ENCODE measurements at regions of chr2 and their contacts with region 1.

Region 1: DNA sequence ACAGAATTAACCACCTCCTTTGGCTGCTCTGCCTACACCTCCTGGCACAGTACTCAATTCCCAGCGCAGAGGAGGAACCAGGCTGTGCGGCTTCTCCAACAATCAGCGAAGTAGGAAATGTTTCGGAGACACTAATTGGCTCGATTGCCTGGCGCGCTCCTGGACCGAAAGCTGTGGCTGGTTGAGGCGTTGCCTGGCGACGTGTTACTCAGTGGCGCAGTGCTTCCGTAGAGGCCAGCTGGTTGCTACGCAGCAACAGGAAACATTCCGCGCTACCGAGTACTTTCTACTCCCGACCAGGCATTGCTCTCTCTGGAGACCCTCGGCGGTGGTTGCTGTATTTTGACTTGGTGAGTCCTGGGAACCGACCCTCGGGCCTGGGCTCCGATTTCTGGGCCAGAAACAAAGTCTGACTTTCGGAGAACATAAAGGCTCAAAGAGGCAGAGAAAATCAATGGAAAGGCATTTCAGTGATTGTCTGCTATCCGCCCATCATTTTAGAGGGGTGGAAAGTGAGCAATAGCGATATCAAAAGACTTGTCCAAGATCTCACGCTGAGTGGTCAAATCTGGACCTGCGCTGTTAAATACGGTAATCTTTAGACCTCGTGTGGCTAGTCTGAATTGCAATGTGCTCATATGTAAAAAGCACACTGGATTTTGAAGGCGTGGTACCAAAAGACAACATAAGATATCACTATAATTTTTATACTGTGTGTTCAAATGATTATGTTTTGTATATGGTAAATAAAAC is at the start of gene DNAH6:
- DNase-seq: peak; percentile 88 to 91
- H3K4me3 ChIP-seq: peak within 1 kb of the TSS; percentile 28
- H3K4me3 Mint-ChIP-seq: peak within 1 kb of the TSS; percentile 76
- H3K27ac Mint-ChIP-seq: peak within 1 kb of the TSS; percentile 90
- H3K4me1 ChIP-seq: no peaks in the 10 kb centered on the region
- H3K4me1 Mint-ChIP-seq: peaks cover 7% of the 10 kb centered on the region
- H3K27me3 ChIP-seq: no peaks in the 10 kb centered on the region
- H3K27me3 Mint-ChIP-seq: no peaks in the 10 kb centered on the region
- CTCF ChIP-seq: no peak
- total RNA-seq, gene DNAH6: 0.32 and 0.70 TPM in 2 replicates

Region 2: DNA sequence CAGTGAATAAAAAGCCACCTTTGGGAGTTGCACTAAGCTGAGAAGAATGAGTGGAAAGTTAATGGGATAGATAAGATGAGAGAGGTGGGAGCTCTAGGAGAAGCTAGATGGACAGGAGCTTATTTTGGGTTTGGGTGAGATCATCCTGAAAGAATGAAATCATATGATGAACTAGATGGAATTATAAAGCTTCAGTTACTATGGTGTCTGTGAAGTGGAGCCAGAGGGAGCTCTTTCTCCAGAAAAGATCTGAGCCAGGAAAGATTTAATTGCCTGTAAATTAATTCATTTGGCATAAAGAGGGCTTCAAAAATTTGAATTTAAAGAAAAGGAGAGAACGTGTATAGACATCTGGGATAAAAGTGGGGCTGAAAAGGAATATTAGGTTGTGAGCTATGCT is 10.2 kb after region 1 on chr2:
- CTCF ChIA-PET with region 1: no interaction called
- POLR2A ChIA-PET with region 1: no interaction called
- intact Hi-C with region 1: loop called (anchors 1 kb)
- DNase-seq: no peak
- H3K4me3 ChIP-seq: no peak overlapping the region
- H3K4me3 Mint-ChIP-seq: no peak overlapping the region
- H3K27ac Mint-ChIP-seq: peak overlapping the region; percentile 4
- H3K4me1 ChIP-seq: peaks cover 15% of the 10 kb centered on the region
- H3K4me1 Mint-ChIP-seq: peaks cover 9% of the 10 kb centered on the region
- H3K27me3 ChIP-seq: no peaks in the 10 kb centered on the region
- H3K27me3 Mint-ChIP-seq: no peaks in the 10 kb centered on the region
- CTCF ChIP-seq: no peak

Region 3: DNA sequence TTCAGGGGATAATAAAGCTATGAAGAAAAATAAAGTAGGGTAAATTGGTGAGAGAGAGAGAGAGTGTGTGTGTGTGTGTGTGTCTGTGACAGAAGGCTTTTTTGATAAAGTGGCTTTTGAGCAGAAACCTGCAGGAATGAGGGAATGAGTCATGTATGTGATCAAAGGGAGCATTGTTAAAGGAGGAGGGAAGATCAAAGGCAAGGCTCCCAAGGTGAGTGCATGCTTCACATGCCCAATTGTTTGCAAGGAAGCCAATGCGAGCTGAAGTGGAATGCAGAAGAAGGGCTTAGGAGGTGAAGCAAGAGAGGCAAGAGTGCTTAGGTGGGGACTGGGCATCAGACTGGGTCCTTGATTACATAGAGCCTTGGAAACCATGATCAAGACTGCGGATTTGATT is 96.7 kb after region 1 on chr2:
- CTCF ChIA-PET with region 1: no interaction called
- POLR2A ChIA-PET with region 1: no interaction called
- intact Hi-C with region 1: loop called (anchors 5 kb)
- DNase-seq: peak; percentile 82 to 88
- H3K4me3 ChIP-seq: no peak overlapping the region
- H3K4me3 Mint-ChIP-seq: peak overlapping the region; percentile 0
- H3K27ac Mint-ChIP-seq: peak overlapping the region; percentile 70
- H3K4me1 ChIP-seq: peaks cover 29% of the 10 kb centered on the region
- H3K4me1 Mint-ChIP-seq: peaks cover 28% of the 10 kb centered on the region
- H3K27me3 ChIP-seq: no peaks in the 10 kb centered on the region
- H3K27me3 Mint-ChIP-seq: no peaks in the 10 kb centered on the region
- CTCF ChIP-seq: no peak